B cell (primary cell): ENCODE measurements at regions of chr1 and their contacts with region 1.

Region 1: GRCh38 chr1:157773493-157774350 is 3.2 kb downstream of the FCRL2 start:
- DNase-seq: peak; percentile 78
- ATAC-seq: peak; percentile 86
- H3K4me3 ChIP-seq: peak overlapping the region in 4 of 5 experiments; percentile 36 to 57 (median 39)
- H3K4me3 Mint-ChIP-seq: peak overlapping the region; percentile 54
- H3K27ac ChIP-seq: peak overlapping the region; percentile 50 to 62
- H3K27ac Mint-ChIP-seq: peak overlapping the region; percentile 57
- H3K4me1 ChIP-seq: peaks cover 78% of the 10 kb centered on the region in 2 donors
- H3K4me1 Mint-ChIP-seq: peaks cover 80% of the 10 kb centered on the region
- H3K27me3 ChIP-seq: no peaks in the 10 kb centered on the region
- H3K27me3 Mint-ChIP-seq: no peaks in the 10 kb centered on the region
- CTCF ChIP-seq: peak; percentile 75

Region 2: DNA sequence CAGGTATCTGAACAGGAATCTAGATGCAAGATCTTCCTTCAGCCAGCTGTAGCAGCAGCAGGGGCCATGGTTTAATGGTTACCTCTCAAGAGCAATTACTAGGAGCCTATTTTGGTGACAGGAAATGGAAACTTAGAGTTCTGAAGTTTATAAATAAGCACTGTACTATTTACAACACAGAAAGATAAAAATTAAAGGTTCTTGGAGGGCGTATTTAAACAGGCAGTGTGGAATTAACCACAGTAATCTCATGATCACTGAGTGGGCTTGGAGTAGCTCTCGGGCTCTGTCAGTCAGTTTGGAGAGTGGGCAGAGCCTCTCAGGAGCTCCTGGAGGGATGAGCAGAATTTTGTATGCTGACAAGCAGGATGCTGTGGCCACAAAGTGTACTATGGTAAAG is 211.2 kb before region 1 on chr1:
- CTCF ChIA-PET with region 1: no interaction called
- POLR2A ChIA-PET with region 1: no interaction called
- intact Hi-C with region 1: loop called (anchors 5 kb)
- DNase-seq: no peak
- ATAC-seq: peak; percentile 19
- H3K4me3 ChIP-seq: peak overlapping the region in 3 of 5 experiments; percentile 13 to 22 (median 18)
- H3K4me3 Mint-ChIP-seq: peak overlapping the region; percentile 68
- H3K27ac ChIP-seq: peak overlapping the region in 1 of 2 donors; percentile 15
- H3K27ac Mint-ChIP-seq: peak overlapping the region; percentile 51
- H3K4me1 ChIP-seq: peaks cover 64 to 65% of the 10 kb centered on the region in 2 donors
- H3K4me1 Mint-ChIP-seq: peaks cover 58% of the 10 kb centered on the region
- H3K27me3 ChIP-seq: no peaks in the 10 kb centered on the region
- H3K27me3 Mint-ChIP-seq: no peaks in the 10 kb centered on the region
- CTCF ChIP-seq: no peak

Region 3: DNA sequence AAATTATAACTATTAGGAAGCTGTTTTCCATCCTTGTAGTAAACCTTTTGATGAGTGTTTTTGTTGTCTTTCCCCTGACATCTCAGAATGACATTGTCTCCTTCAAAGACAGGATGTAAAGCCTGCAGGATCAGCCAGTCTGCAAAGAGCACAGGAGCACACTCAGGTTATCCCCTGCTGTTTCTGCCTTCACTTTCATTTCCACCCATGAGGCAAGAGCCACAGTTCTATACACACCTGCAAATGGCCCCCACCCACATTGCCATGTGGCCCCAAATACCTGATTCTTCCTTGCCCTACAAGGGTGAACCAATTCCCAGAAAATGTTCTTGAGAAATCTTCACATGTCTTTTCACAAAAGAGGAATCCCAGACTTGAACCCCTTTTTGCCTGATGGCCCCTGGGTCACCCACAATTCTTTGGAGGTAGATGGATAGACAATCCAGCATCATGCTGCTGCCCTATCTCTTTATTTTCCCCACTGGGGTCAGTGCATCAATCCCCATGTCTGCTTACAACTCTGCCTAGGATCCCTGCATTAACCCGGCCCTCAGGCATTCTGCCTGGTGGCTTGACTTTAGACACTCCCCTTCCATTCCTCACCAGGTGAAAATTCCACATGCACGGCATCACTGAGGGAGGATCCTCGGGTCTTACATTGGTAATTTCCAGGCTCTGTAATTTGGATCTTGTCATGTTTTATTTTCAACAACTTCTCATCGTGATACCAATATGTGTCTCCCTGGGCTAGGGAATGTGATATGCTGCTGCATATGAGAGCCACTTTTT is 75.7 kb before region 1 on chr1:
- CTCF ChIA-PET with region 1: interaction called, 56 read pairs
- POLR2A ChIA-PET with region 1: no interaction called
- intact Hi-C with region 1: loop called (anchors 2 kb)
- DNase-seq: peak; percentile 51
- ATAC-seq: peak; percentile 34
- H3K4me3 ChIP-seq: peak overlapping the region in 3 of 5 experiments; percentile 35 to 73 (median 65)
- H3K4me3 Mint-ChIP-seq: peak overlapping the region; percentile 71
- H3K27ac ChIP-seq: peak overlapping the region; percentile 75 to 86
- H3K27ac Mint-ChIP-seq: peak overlapping the region; percentile 90
- H3K4me1 ChIP-seq: peaks cover 88 to 90% of the 10 kb centered on the region in 2 donors
- H3K4me1 Mint-ChIP-seq: peaks cover 93% of the 10 kb centered on the region
- H3K27me3 ChIP-seq: no peaks in the 10 kb centered on the region
- H3K27me3 Mint-ChIP-seq: no peaks in the 10 kb centered on the region
- CTCF ChIP-seq: no peak

Region 4: GRCh38 chr1:157758018-157758417 is 15.7 kb before region 1 on chr1:
- CTCF ChIA-PET with region 1: interaction called, 26 read pairs
- POLR2A ChIA-PET with region 1: no interaction called
- intact Hi-C with region 1: no loop called
- DNase-seq: no peak
- ATAC-seq: no peak
- H3K4me3 ChIP-seq: no peak overlapping the region
- H3K4me3 Mint-ChIP-seq: peak overlapping the region; percentile 64
- H3K27ac ChIP-seq: peak overlapping the region in 1 of 2 donors; percentile 70
- H3K27ac Mint-ChIP-seq: peak overlapping the region; percentile 75
- H3K4me1 ChIP-seq: peaks cover 19 to 21% of the 10 kb centered on the region in 2 donors
- H3K4me1 Mint-ChIP-seq: peaks cover 48% of the 10 kb centered on the region
- H3K27me3 ChIP-seq: no peaks in the 10 kb centered on the region
- H3K27me3 Mint-ChIP-seq: no peaks in the 10 kb centered on the region
- CTCF ChIP-seq: no peak

Region 5: GRCh38 chr1:157819896-157820295 is 46.2 kb after region 1 on chr1 and contains the start of gene FCRL1:
- CTCF ChIA-PET with region 1: interaction called, 7 read pairs
- POLR2A ChIA-PET with region 1: interaction called, 3 read pairs
- intact Hi-C with region 1: loop called (anchors 1 kb)
- DNase-seq: peak; percentile 77
- ATAC-seq: peak; percentile 86
- H3K4me3 ChIP-seq: peak within 1 kb of the TSS; percentile 66 to 97 (median 84)
- H3K4me3 Mint-ChIP-seq: no peak within 1 kb of the TSS
- H3K27ac ChIP-seq: peak within 1 kb of the TSS; percentile 50 to 83
- H3K27ac Mint-ChIP-seq: no peak within 1 kb of the TSS
- H3K4me1 ChIP-seq: peaks cover 20 to 23% of the 10 kb centered on the region in 2 donors
- H3K4me1 Mint-ChIP-seq: peaks cover 55% of the 10 kb centered on the region
- H3K27me3 ChIP-seq: no peaks in the 10 kb centered on the region
- H3K27me3 Mint-ChIP-seq: no peaks in the 10 kb centered on the region
- CTCF ChIP-seq: no peak
- total RNA-seq, gene FCRL1: 277 and 306 TPM in 2 replicates

Region 6: DNA sequence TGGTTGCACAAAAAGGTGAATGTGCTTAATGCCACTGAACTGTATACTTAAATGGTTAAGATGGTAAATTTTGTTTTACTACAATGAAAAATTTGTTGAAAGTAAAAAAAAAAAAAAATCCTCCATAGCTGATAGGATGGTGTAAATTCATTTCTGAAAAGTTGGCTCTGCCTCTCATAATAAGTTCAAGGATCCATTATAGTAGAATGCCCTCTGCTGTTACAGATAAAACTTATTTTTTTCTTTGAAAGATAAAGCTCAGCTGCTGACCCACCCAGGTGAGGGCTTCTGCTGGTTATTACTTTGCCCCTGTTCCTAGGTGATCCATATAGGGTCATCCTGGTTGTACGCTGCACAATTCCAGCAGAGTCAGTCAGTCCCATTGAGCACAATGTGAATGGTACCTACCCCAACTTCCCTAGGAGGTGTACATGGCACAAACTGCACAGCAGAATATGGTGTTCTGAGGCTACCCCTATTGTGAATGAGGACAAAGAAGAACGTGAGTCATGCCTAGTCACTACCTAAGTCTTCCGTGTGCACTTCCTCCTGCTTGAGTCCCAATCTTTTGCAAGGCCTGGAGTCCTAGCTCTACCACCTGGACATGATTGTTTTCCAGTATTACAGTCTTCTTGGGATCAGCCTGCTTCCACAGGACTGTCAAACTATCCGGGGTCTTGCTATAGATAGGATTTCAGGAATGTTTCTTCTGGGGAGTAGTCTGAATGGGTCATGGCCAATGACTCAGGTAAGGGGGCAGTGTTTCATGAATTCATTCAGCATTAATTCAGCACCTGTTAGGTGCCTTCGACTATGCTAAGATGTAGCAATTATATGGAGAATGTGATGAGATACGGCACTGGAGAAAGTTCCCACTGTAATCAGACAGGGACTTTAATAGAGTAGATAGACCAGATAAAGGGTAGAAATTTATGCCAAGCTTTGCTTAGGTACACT is 88.7 kb after region 1 on chr1:
- CTCF ChIA-PET with region 1: interaction called, 22 read pairs
- POLR2A ChIA-PET with region 1: no interaction called
- intact Hi-C with region 1: loop called (anchors 5 kb)
- DNase-seq: peak; percentile 34
- ATAC-seq: peak; percentile 24
- H3K4me3 ChIP-seq: no peak overlapping the region
- H3K4me3 Mint-ChIP-seq: no peak overlapping the region
- H3K27ac ChIP-seq: no peak overlapping the region
- H3K27ac Mint-ChIP-seq: peak overlapping the region; percentile 32
- H3K4me1 ChIP-seq: peaks cover 6 to 7% of the 10 kb centered on the region in 2 donors
- H3K4me1 Mint-ChIP-seq: peaks cover 19% of the 10 kb centered on the region
- H3K27me3 ChIP-seq: no peaks in the 10 kb centered on the region
- H3K27me3 Mint-ChIP-seq: no peaks in the 10 kb centered on the region
- CTCF ChIP-seq: no peak